Activated CD4-positive, alpha-beta T cell treated with anti-CD3 and anti-CD28 coated beads, Interleukin-2, amount 10 ng/mL, durations not matched to agents 24 days and 14 days (primary cell): ENCODE measurements at regions of chr3 and their contacts with region 1.

Region 1: DNA sequence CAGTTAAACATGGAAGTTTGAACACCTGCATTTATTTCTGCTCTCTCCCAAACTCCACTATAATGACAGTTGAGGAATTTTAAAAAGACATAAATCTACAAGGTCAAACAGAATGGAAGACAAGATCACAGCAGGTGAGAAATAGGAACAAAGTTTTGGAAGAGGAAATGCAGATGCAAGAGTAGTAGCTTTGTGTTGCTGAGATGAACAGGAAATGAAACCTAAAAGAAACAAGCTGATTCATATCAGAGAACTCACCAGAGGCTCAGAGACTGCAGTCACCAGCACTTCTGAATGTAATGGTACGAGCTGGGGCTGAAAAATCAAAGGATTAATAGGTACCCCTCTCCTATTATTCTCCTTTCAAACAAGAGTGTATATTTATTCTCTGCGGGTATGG is 459.9 kb downstream of the RAP2B start:
- DNase-seq: peak; percentile 74
- H3K4me3 Mint-ChIP-seq: peak overlapping the region; percentile 66
- H3K27ac Mint-ChIP-seq: peak overlapping the region; percentile 77
- H3K4me1 Mint-ChIP-seq: peaks cover 47% of the 10 kb centered on the region
- H3K27me3 Mint-ChIP-seq: no peaks in the 10 kb centered on the region

Region 2: GRCh38 chr3:152695840-152696239 is 926.1 kb before region 1 on chr3:
- intact Hi-C with region 1: loop called (anchors 10 kb)
- DNase-seq: no peak
- H3K4me3 Mint-ChIP-seq: no peak overlapping the region
- H3K27ac Mint-ChIP-seq: no peak overlapping the region
- H3K4me1 Mint-ChIP-seq: peaks cover 3% of the 10 kb centered on the region
- H3K27me3 Mint-ChIP-seq: no peaks in the 10 kb centered on the region

Region 3: DNA sequence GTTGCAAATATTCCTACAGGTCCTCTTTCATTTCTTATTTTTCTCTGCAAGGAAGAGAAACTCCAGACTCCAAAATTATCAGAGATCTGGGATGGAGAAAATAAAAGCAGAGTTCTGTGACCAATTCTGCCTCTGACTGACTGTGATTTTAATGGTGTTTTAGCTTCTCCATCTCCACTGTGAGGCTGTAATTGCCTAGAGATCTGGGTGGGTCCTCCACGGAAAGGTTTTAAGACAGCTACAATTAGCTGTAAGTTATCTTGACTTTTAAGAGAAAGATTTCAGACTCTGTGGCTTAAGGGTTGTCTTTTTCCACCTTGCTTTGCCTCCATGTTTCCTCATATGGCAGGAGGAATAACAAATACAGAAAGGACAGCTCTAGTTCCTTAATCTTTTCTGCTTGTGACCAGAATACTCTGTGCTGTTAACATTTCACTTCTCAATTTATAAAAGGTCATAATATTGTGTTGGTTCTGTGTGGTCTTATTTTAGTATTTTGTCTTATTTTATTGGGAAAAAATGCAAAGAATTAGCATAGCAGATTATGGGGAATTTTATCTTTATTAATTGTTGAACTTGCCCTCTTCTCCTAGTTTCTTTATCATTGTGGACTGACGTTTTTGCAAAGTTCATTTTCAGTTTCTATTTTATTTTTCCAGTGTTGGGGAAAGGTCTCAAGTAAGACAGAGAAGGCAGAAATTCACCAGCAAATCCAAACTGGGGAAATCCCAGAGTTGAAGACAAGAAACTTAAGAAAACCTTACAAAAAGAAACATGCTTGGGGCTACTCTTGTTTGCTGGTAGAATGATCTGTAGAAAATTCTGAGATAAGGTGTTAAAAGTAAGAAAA is 302.0 kb before region 1 on chr3:
- intact Hi-C with region 1: loop called (anchors 10 kb)
- DNase-seq: no peak
- H3K4me3 Mint-ChIP-seq: peak overlapping the region; percentile 34
- H3K27ac Mint-ChIP-seq: peak overlapping the region; percentile 52
- H3K4me1 Mint-ChIP-seq: peaks cover 17% of the 10 kb centered on the region
- H3K27me3 Mint-ChIP-seq: no peaks in the 10 kb centered on the region

Region 4: DNA sequence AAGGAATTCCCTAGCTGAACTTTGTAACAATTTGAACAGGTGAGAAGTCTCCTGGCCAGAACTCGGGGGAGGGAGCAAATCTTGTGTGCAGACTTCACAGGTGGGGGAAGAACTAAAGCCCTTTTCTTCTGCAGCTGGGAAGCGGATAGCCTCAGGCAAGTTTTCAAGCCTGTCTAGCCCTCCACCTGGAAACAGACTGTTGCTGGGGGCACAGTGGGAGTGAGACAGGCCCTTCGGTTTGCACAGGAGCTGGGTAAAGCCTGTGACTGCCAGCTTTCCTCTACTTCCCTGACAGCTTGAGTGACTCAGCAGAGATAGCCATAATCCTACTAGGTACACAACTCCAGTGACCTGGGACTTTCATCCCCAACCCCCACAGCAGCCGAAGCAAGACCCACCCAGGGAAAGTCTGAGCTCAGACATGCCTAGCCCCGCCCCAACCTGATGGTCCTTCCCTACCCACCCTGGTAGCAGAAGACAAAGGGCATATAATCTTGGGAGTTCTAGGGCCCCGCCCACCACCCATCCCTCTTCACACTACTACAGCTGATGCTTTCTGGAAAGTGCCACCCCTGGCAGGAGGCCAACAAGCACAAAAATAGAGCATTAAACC is 18.8 kb after region 1 on chr3:
- intact Hi-C with region 1: loop called (anchors 1 kb)
- DNase-seq: no peak
- H3K4me3 Mint-ChIP-seq: no peak overlapping the region
- H3K27ac Mint-ChIP-seq: no peak overlapping the region
- H3K4me1 Mint-ChIP-seq: peaks cover 41% of the 10 kb centered on the region
- H3K27me3 Mint-ChIP-seq: no peaks in the 10 kb centered on the region